Activated CD8-positive, alpha-beta memory T cell treated with anti-CD3 and anti-CD28 coated beads, Interleukin-2, amount 10 ng/mL, durations not matched to agents 7 days and 5 days (primary cell): ENCODE measurements at regions of chr1 and their contacts with region 1.

Region 1: GRCh38 chr1:26998429-26999300 is 5.2 kb downstream of the TRNP1 start:
- DNase-seq: no peak
- ATAC-seq: no peak
- H3K4me3 Mint-ChIP-seq: no peak overlapping the region
- H3K27ac Mint-ChIP-seq: no peak overlapping the region
- H3K4me1 Mint-ChIP-seq: peaks cover 6% of the 10 kb centered on the region
- H3K27me3 Mint-ChIP-seq: peaks cover 56% of the 10 kb centered on the region

Region 2: DNA sequence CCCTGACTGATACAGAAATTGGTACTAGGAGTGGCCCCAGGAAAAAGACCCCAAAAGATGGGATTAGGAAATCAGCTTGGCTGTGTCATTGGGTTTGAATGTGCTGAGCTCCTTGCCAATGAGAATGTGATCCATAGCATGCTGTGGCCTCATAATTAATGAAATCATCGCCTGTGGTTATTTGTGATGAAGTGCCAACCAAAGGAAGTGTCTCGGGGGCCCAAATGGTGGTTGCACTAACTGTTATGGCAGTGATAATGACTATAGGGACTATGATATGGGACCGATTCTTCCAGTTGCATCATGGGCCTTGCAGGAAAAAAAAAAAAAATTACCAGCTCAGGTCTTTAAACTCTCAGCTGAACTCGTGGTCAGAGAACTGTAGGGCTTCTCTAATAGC is 187.6 kb before region 1 on chr1:
- CTCF ChIA-PET with region 1: no interaction called
- DNase-seq: no peak
- ATAC-seq: peak; percentile 23
- H3K4me3 Mint-ChIP-seq: no peak overlapping the region
- H3K27ac Mint-ChIP-seq: peak overlapping the region; percentile 43
- H3K4me1 Mint-ChIP-seq: peaks cover 28% of the 10 kb centered on the region
- H3K27me3 Mint-ChIP-seq: no peaks in the 10 kb centered on the region

Region 3: DNA sequence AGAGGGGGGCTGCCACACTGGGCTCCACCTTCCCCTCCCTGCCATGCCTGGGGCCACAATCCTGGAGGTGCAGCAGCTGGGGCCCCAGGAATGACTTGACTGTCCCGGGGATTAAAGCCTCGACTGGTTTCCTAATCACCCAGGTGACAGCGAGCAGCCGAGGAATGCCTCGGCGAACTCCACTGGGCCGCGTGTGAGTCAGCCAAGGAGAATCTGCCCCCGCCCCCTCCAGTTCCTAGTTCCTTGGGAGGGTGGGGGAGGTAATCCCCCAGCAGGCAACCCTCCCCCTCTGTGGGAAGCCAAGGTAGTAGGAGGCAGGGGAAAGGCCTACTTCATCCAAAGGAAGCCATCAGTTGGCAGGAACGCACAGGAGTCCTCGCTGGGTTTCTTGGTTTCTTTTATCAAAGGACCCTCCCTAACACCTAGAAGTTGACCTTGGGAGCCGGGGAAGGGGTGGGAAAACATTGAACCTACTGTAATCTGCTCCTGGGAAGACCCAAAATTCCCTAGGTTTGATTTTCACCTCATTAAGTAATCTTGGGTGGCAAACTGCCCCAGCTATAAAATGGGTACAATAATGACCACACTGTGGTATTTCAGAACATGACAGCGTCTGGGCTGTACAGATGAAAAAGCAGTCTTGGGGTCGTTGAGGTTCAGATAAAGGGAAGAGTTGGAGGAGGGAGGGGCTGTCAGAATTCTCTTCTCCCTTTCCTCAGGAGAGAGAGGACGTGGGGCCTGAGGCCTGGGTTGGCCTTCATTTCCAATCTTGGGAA is 12.5 kb after region 1 on chr1:
- CTCF ChIA-PET with region 1: interaction called, 23 read pairs
- DNase-seq: no peak
- ATAC-seq: no peak
- H3K4me3 Mint-ChIP-seq: no peak overlapping the region
- H3K27ac Mint-ChIP-seq: no peak overlapping the region
- H3K4me1 Mint-ChIP-seq: peaks cover 6% of the 10 kb centered on the region
- H3K27me3 Mint-ChIP-seq: peaks cover 32% of the 10 kb centered on the region

Region 4: DNA sequence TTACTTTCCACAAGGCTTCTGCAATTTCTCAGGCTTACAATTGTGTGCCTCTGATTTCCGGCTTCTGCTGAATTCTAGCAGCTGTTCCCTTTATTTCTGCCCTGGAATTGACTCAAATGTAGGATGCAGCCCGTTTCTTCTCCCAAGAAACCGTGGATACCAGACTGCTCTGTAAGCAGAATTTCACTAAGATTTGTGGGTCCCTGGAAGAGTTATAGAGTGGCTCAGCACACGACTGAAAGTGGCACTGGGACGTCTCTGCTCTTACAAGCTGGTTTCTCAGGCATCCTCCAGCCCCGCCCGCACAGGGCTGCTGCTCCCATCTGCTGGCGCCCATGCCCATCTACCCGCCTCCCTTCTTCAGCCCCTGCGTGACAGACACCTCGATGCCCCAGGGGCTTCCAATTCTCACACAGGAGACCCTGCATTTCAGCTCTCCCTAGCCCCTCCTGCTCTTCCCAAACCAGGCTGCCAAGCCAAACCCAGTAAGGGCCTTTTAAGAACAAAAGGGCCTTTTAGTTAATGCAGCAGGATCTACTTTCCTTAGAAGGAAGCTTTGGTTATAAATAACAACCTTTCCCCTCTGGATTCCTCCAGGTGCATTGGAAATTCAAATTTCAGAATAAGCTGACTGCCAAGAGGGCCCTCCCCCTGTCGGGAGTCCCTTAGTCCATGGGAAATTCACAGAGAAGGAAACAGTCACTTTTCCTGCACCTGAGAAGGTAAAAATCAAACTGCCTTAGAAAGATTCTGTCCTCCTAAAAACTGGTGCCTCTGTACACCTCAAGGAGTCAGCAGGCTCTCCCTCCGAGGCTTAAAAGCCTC is 59.3 kb after region 1 on chr1:
- CTCF ChIA-PET with region 1: no interaction called
- DNase-seq: no peak
- ATAC-seq: no peak
- H3K4me3 Mint-ChIP-seq: no peak overlapping the region
- H3K27ac Mint-ChIP-seq: no peak overlapping the region
- H3K4me1 Mint-ChIP-seq: no peaks in the 10 kb centered on the region
- H3K27me3 Mint-ChIP-seq: no peaks in the 10 kb centered on the region